AG04449 (cell line): ENCODE measurements at regions of chr9 and their contacts with region 1.

Region 1: GRCh38 chr9:133023117-133023890 is 7.5 kb upstream of the GTF3C5 start:
- DNase-seq: no peak
- H3K4me3 ChIP-seq: no peak overlapping the region
- CTCF ChIP-seq: no peak

Region 2: DNA sequence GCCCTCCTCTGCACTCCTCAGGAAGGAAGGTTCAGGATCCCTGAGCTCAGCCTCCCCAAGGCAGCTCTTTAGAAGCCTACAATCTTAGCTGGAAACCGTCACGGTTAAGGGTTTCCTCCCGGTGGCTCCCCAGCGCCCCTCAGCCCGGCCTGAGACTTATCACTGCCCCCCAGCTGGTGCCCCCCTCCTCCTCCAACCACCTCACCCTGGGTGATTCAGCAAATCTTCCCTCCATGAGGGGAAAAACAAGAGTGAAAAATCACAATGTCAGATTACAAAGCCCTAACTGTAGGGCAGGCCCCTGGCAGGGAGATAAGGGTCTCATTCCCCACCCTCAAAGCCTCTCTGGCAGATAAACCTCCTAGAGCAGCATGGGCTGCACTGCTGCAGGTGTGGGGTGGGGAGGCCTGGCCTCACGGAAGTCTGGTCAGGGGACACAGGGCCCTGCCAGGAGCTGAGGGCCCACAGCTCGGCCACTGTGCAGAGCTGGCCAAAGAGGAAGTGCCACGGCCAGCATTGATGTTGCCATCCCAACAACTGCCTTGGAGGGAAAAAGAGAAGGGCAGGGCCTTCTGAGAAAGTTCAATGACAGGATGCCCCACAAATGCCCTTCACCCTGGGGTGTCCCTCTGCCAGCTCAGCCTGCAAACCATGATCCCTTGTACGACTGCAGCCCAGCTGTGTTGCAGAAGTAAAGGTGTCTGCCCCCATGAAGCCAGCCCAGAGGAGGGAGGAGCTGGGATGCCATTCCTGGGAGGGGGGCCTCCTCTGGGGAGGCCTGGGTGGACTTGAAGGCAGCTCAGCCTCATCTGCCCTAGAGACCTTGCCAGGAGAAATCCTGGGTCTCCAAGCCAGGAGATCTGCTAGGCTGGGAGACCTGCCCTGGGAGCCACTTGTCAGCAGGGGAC is 19.0 kb before region 1 on chr9:
- CTCF ChIA-PET with region 1: interaction called, 48 read pairs
- POLR2A ChIA-PET with region 1: no interaction called
- DNase-seq: no peak
- H3K4me3 ChIP-seq: no peak overlapping the region
- CTCF ChIP-seq: no peak

Region 3: GRCh38 chr9:133009906-133010582 is 13.3 kb before region 1 on chr9:
- CTCF ChIA-PET with region 1: interaction called, 82 read pairs
- POLR2A ChIA-PET with region 1: no interaction called
- DNase-seq: no peak
- H3K4me3 ChIP-seq: no peak overlapping the region
- CTCF ChIP-seq: no peak

Region 4: GRCh38 chr9:133115448-133116345 is 92.4 kb after region 1 on chr9:
- CTCF ChIA-PET with region 1: no interaction called
- POLR2A ChIA-PET with region 1: no interaction called
- DNase-seq: no peak
- H3K4me3 ChIP-seq: no peak overlapping the region
- CTCF ChIP-seq: no peak

Region 5: DNA sequence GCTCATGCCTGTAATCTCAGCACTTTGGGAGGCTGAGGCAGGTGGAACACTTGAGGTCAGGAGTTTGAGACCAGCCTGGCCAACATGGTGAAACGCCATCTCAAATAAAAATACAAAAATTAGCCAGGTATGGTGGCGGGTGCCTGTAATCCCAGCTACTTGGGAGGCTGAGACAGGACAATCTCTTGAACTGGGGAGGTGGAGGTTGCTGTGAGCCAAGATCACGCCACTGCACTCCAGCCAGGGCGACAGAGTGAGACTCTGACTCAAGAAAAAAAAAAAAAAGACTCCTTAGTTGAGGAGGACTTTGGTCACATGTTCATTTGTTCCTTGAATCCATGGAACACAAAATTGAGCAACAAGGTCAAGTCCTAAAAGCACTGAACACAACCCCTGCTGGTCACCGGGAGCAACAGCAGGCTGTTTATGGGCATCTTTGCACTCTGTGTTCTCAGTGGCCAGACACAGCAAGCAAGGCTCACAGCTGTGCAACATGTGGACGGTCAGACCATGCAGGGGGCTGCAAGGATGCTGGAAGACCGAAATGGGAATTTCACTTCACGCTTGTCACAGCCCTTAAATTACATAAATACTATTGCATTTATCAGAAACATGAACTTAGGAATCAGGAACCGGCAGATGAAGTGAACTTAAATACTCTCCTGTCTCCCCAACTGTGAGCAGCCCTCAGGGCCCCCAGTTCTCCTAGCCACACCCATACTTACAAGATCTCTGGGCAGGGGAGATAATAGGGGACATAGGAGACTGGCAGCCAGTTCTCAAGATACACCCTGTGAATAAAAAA is 137.6 kb after region 1 on chr9:
- CTCF ChIA-PET with region 1: interaction called, 10 read pairs
- POLR2A ChIA-PET with region 1: no interaction called
- DNase-seq: no peak
- H3K4me3 ChIP-seq: no peak overlapping the region
- CTCF ChIP-seq: peak; percentile 77